Ascending aorta (tissue), 2 donors: ENCODE measurements at regions of chr2 and their contacts with region 1.

Region 1: DNA sequence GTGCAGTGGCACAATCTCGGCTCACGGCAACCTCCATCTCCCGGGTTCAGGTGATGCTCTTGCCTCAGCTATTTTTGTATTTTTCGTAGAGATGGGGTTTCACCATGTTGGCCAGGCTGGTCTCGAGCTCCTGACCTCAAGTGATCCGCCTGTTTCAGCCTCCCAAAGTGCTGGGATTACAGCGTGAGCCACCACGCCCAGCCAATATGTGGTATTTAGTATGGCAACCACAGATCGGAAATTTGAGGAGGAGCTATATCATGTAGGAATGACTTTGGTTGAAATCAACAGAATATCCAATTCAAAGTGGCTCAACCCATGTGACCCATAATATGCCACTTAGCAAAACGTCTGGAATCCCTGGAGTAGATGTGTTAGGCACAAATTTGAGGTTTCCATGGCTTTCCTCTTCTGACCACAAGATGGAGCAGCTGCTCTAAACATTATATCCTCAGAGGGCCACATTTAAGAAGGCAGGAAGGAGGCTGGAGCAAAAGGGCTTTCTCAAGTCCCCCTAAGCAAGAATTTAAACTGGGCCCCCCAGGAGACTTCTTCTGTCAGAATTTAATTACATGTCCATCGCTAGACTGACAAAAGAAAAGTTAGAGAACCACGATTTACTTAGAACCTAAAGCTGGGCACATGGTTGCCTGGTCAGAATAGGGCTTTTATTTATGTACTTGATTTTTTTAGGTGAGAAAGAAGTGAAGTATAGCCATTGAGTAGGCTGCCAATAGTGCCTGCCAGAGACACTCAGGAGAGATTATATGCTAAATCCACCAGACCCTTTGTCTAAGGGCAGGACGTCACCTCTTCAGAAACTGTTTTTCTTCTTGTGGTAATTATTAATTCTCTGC is 49.6 kb upstream of the ITSN2 start:
- DNase-seq: peak in 1 of 2 donors; percentile 67
- H3K4me3 ChIP-seq: no peak overlapping the region
- H3K27ac ChIP-seq: no peak overlapping the region
- H3K4me1 ChIP-seq: no peaks in the 10 kb centered on the region
- H3K27me3 ChIP-seq: no peaks in the 10 kb centered on the region
- CTCF ChIP-seq: peak; percentile 73 to 86 (median 80)

Region 2: DNA sequence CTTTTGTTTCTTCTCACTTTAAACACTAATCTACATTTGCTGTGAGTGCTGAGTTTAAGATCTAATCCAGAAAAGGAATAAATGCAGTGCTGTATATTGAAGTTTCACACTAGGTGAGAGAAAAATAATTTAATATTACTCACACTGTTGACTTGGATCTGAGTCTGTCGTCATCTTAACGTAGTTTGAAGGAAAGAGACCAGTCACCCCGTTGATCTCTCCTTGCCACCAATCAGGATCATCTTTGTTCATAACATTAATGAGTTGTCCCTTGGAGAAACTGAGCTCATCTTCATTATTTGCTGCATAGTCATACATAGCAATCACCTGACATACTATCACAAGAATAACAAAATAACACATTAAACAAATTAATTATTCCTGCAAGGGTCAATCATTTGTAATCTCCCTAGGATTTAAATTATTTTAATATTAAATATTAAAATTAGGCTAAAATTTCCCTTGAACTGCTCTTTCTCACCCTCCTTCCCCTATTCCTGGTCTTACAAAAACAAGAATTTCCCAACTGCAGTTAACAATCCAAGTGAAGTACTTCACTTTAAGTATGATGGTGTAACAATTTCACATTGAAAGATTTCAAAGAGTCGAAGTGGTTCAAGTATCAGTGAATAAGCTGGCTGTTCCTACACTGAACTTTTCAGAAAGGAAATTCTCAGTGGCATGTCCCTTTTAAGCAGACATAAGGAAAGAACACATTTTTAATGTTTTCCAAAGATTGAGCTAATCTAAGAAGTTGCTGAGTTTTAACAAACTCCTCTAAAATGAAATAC is 163.7 kb before region 1 on chr2:
- intact Hi-C with region 1: no loop called
- DNase-seq: no peak
- H3K4me3 ChIP-seq: no peak overlapping the region
- H3K27ac ChIP-seq: no peak overlapping the region
- H3K4me1 ChIP-seq: no peaks in the 10 kb centered on the region
- H3K27me3 ChIP-seq: no peaks in the 10 kb centered on the region
- CTCF ChIP-seq: no peak

Region 3: GRCh38 chr2:24491626-24492420 is 81.9 kb after region 1 on chr2:
- intact Hi-C with region 1: no loop called
- DNase-seq: peak in 1 of 2 donors; percentile 79
- H3K4me3 ChIP-seq: peak overlapping the region; percentile 90 to 93
- H3K27ac ChIP-seq: peak overlapping the region; percentile 76 to 96
- H3K4me1 ChIP-seq: peaks cover 0 to 9% of the 10 kb centered on the region in 2 donors
- H3K27me3 ChIP-seq: no peaks in the 10 kb centered on the region
- CTCF ChIP-seq: no peak

Region 4: DNA sequence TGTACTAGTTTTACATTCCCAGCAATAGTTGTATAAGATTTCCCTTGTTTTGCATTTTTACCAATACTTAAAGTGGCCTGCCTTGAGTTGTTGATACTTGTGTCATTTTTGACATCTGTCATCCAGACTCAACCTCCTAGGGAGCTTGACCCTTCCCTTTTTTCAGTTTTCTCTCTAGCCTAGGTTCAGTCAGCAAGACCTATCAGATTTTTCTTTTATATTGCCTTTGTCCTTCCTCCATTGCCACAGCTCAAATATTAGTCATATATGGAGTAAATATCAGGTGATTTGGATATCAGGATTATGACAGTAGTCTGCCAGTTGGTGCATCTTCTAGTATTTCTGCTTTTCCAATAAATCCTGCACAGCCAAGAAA is 396.7 kb after region 1 on chr2:
- intact Hi-C with region 1: no loop called
- DNase-seq: no peak
- H3K4me3 ChIP-seq: no peak overlapping the region
- H3K27ac ChIP-seq: no peak overlapping the region
- H3K4me1 ChIP-seq: no peaks in the 10 kb centered on the region
- H3K27me3 ChIP-seq: no peaks in the 10 kb centered on the region
- CTCF ChIP-seq: no peak

Region 5: DNA sequence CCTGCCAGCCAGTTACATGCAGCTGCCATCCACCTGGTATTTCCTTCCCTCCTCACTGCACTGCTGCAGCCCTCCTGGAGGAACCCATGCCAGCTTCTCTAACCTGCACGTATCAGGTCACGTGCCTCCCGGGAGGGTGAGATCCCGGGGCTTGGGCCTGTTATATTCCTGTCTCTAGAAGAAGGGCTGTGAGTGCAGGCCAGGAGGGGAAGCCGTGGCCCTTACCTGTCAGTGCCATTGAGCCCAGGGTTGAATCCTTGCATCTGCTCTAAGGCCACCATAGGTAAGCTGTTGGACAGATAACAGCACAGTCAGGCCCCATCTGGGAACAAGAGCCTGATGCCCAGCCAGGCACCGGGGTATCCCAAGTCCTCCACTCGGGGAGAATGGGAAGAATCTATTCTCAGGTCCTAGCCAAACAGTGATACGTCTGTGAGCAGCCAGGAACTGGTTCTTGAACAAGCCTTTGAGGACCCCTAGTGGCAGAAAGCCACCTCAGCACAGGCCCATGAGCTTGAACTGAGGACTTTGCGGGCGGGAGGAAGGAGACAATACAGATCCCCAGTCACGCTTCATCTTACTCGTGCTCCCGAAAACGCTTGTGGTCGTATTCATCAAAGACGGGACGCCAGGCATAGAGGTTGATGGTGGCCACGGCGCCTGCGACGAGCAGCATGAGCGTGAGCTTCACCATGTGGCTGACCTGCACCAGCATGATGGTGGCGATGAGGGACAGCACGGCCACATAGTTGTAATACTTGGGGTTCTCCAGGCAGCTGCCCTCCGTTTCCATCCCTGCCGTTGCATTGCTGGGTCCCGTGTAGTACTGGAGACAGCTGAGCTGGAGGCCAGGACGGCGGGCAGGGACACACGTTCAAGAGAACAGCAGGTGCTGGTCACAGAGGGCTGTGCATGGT is 417.7 kb after region 1 on chr2:
- intact Hi-C with region 1: loop called (anchors 1 kb)
- DNase-seq: peak in 1 of 2 donors; percentile 86
- H3K4me3 ChIP-seq: no peak overlapping the region
- H3K27ac ChIP-seq: no peak overlapping the region
- H3K4me1 ChIP-seq: no peaks in the 10 kb centered on the region
- H3K27me3 ChIP-seq: no peaks in the 10 kb centered on the region
- CTCF ChIP-seq: peak; percentile 70 to 88 (median 83)

Region 6: GRCh38 chr2:25127646-25128045 is 717.7 kb after region 1 on chr2:
- intact Hi-C with region 1: loop called (anchors 5 kb)
- DNase-seq: no peak
- H3K4me3 ChIP-seq: no peak overlapping the region
- H3K27ac ChIP-seq: no peak overlapping the region
- H3K4me1 ChIP-seq: no peaks in the 10 kb centered on the region
- H3K27me3 ChIP-seq: no peaks in the 10 kb centered on the region
- CTCF ChIP-seq: no peak